HCT116 (cell line): ENCODE measurements at regions of chr2 and their contacts with region 1.

Region 1: GRCh38 chr2:200713003-200713703 is 98.6 kb upstream of the BZW1 start:
- DNase-seq: peak; percentile 98
- ATAC-seq: peak; percentile 99
- H3K4me3 ChIP-seq: peak overlapping the region; percentile 21 to 32
- H3K27ac ChIP-seq: peak overlapping the region; percentile 71
- H3K4me1 ChIP-seq: peaks cover 9 to 18% of the 10 kb centered on the region in 2 experiments
- H3K27me3 ChIP-seq: no peaks in the 10 kb centered on the region
- CTCF ChIP-seq: peak; percentile 79 to 95 (median 89)
- POLR2A ChIP-seq: peak; percentile 84
- RAD21 ChIP-seq: peak; percentile 100

Region 2: GRCh38 chr2:200735061-200735460 is 21.9 kb after region 1 on chr2:
- CTCF ChIA-PET with region 1: interaction called, 10 read pairs
- POLR2A ChIA-PET with region 1: interaction called, 6 read pairs
- RAD21 ChIA-PET with region 1: interaction called in 1 of 2 experiments, 4 read pairs
- intact Hi-C with region 1: loop called (anchors 1 kb)
- DNase-seq: no peak
- ATAC-seq: no peak
- H3K4me3 ChIP-seq: no peak overlapping the region
- H3K27ac ChIP-seq: no peak overlapping the region
- H3K4me1 ChIP-seq: peaks cover 0 to 6% of the 10 kb centered on the region in 2 experiments; a peak in 1 of 4 replicates
- H3K27me3 ChIP-seq: no peaks in the 10 kb centered on the region
- CTCF ChIP-seq: no peak
- POLR2A ChIP-seq: no peak
- RAD21 ChIP-seq: no peak

Region 3: GRCh38 chr2:200811336-200812121 is 98.4 kb after region 1 on chr2 and contains the start of gene BZW1:
- CTCF ChIA-PET with region 1: no interaction called
- POLR2A ChIA-PET with region 1: interaction called, 3 read pairs
- RAD21 ChIA-PET with region 1: no interaction called
- intact Hi-C with region 1: loop called (anchors 1 kb)
- DNase-seq: peak; percentile 92
- ATAC-seq: peak; percentile 90
- H3K4me3 ChIP-seq: peak within 1 kb of the TSS; percentile 66 to 85
- H3K27ac ChIP-seq: peak within 1 kb of the TSS; percentile 96
- H3K4me1 ChIP-seq: peaks cover 12 to 26% of the 10 kb centered on the region in 2 experiments
- H3K27me3 ChIP-seq: no peaks in the 10 kb centered on the region
- CTCF ChIP-seq: no peak
- POLR2A ChIP-seq: peak; percentile 74
- RAD21 ChIP-seq: 0 out of 2 replicates have a peak, but pooled peaks have one; percentile 4
- total RNA-seq, gene BZW1: 454 TPM

Region 4: GRCh38 chr2:200888704-200889625 is 175.8 kb after region 1 on chr2 and contains the starts of genes NIF3L1 and PPIL3:
- CTCF ChIA-PET with region 1: interaction called, 7 read pairs
- POLR2A ChIA-PET with region 1: interaction called, 7 read pairs
- RAD21 ChIA-PET with region 1: no interaction called
- intact Hi-C with region 1: loop called (anchors 1 kb)
- DNase-seq: peak; percentile 99
- ATAC-seq: peak; percentile 85
- H3K4me3 ChIP-seq: peak within 1 kb of the TSS; percentile 63 to 73
- H3K27ac ChIP-seq: peak within 1 kb of the TSS; percentile 94
- H3K4me1 ChIP-seq: peaks cover 0 to 16% of the 10 kb centered on the region in 2 experiments; a peak in 3 of 4 replicates
- H3K27me3 ChIP-seq: no peaks in the 10 kb centered on the region
- CTCF ChIP-seq: no peak
- POLR2A ChIP-seq: peak; percentile 36
- RAD21 ChIP-seq: no peak; the same call in 1 of the 2 replicates
- total RNA-seq, gene NIF3L1: 44.7 TPM
- total RNA-seq, gene PPIL3: 55.9 TPM

Region 5: GRCh38 chr2:201176081-201176481 is 462.9 kb after region 1 on chr2:
- CTCF ChIA-PET with region 1: interaction called, 3 read pairs
- POLR2A ChIA-PET with region 1: no interaction called
- RAD21 ChIA-PET with region 1: no interaction called
- intact Hi-C with region 1: loop called (anchors 2 kb)
- DNase-seq: no peak
- ATAC-seq: no peak
- H3K4me3 ChIP-seq: no peak overlapping the region
- H3K27ac ChIP-seq: no peak overlapping the region
- H3K4me1 ChIP-seq: peaks cover 0 to 3% of the 10 kb centered on the region in 2 experiments; a peak in 1 of 4 replicates
- H3K27me3 ChIP-seq: no peaks in the 10 kb centered on the region
- CTCF ChIP-seq: no peak
- POLR2A ChIP-seq: no peak
- RAD21 ChIP-seq: no peak